WTC11 (cell line): ENCODE measurements at regions of chr11 and their contacts with region 1.

Region 1: DNA sequence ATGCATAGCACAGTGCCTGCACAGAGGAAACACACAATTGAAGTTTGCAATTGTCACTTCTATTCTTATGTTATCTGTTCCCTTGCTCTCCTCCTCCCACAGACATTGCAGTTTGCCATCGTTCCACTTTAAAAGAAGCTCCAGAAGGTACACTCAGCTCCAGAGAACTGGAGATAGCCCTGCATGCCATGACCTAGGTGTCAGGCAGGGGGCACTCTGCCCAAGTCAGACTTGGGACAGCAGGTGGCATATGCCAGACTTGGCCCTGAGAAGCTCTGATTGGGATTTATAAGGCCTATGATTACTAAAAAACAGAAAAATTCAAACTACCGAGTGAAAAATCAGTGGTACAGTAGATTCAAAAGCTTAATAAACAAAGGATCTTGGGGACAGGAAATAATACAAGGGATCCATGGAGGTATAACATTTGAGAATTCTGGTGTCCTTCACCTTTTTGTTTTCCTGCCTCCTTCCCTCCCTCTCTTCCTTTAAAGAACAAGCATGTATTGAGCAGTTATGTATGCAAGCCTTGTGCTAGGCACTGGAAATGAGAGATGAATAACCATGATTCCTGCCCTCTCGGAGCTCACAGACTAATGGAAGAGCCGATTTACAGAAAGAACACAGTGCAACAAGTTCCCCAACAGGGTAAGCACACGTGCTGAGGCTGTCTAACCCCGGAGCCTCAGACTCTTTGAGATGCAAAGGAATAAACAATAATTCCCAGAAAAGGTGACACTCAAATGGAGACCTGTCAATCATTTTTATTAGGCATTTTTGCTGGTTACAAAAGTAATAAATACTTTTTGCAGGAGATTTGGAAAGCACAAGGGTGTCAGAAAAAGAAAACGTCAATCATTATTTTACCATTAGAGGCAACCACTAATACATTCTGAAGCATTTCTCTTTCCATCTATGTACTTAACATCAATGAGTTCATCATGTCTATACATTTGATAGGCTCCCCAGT is 39.8 kb downstream of the TENM4 start:
- DNase-seq: peak; percentile 72
- ATAC-seq: peak; percentile 98
- H3K4me3 Mint-ChIP-seq: no peak overlapping the region
- H3K27ac Mint-ChIP-seq: no peak overlapping the region
- H3K4me1 Mint-ChIP-seq: peaks cover 3% of the 10 kb centered on the region
- H3K27me3 Mint-ChIP-seq: no peaks in the 10 kb centered on the region
- CTCF ChIP-seq: peak; percentile 82

Region 2: DNA sequence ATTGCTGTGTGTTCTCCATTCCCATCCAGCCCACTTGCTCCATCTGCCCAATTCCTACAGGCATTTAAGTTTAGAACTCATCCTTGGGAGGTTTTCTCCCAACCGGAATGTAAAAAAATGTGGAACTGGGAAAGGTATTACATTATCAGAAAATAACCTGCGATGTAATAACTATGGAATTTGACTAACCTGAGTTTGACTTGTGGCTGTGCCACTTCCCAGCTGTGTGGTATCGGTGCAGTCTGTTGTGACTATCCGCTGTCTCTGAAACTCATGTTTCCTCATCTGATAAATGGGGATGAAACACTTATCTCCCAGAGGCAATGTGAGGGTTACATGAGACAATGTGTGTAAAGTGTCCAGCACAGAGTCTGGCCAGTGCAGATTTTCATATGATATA is 37.7 kb before region 1 on chr11:
- CTCF ChIA-PET with region 1: interaction called, 11 read pairs
- POLR2A ChIA-PET with region 1: no interaction called
- DNase-seq: no peak
- ATAC-seq: no peak
- H3K4me3 Mint-ChIP-seq: no peak overlapping the region
- H3K27ac Mint-ChIP-seq: no peak overlapping the region
- H3K4me1 Mint-ChIP-seq: peaks cover 11% of the 10 kb centered on the region
- H3K27me3 Mint-ChIP-seq: no peaks in the 10 kb centered on the region
- CTCF ChIP-seq: no peak

Region 3: GRCh38 chr11:79413268-79413667 is 12.3 kb after region 1 on chr11:
- CTCF ChIA-PET with region 1: interaction called, 38 read pairs
- POLR2A ChIA-PET with region 1: interaction called, 3 read pairs
- DNase-seq: peak; percentile 44
- ATAC-seq: peak; percentile 98
- H3K4me3 Mint-ChIP-seq: no peak overlapping the region
- H3K27ac Mint-ChIP-seq: no peak overlapping the region
- H3K4me1 Mint-ChIP-seq: peaks cover 11% of the 10 kb centered on the region
- H3K27me3 Mint-ChIP-seq: peaks cover 3% of the 10 kb centered on the region; the same call in 1 of the 2 replicates
- CTCF ChIP-seq: no peak

Region 4: GRCh38 chr11:79431535-79431934 is 30.5 kb after region 1 on chr11:
- CTCF ChIA-PET with region 1: interaction called, 26 read pairs
- POLR2A ChIA-PET with region 1: no interaction called
- DNase-seq: no peak
- ATAC-seq: no peak
- H3K4me3 Mint-ChIP-seq: no peak overlapping the region
- H3K27ac Mint-ChIP-seq: no peak overlapping the region
- H3K4me1 Mint-ChIP-seq: peaks cover 68% of the 10 kb centered on the region
- H3K27me3 Mint-ChIP-seq: peaks cover 63% of the 10 kb centered on the region
- CTCF ChIP-seq: no peak

Region 5: GRCh38 chr11:79458709-79459108 is 57.7 kb after region 1 on chr11:
- CTCF ChIA-PET with region 1: interaction called, 11 read pairs
- POLR2A ChIA-PET with region 1: no interaction called
- DNase-seq: no peak
- ATAC-seq: no peak
- H3K4me3 Mint-ChIP-seq: no peak overlapping the region
- H3K27ac Mint-ChIP-seq: no peak overlapping the region
- H3K4me1 Mint-ChIP-seq: peaks cover 25% of the 10 kb centered on the region
- H3K27me3 Mint-ChIP-seq: no peaks in the 10 kb centered on the region
- CTCF ChIP-seq: no peak

Region 6: DNA sequence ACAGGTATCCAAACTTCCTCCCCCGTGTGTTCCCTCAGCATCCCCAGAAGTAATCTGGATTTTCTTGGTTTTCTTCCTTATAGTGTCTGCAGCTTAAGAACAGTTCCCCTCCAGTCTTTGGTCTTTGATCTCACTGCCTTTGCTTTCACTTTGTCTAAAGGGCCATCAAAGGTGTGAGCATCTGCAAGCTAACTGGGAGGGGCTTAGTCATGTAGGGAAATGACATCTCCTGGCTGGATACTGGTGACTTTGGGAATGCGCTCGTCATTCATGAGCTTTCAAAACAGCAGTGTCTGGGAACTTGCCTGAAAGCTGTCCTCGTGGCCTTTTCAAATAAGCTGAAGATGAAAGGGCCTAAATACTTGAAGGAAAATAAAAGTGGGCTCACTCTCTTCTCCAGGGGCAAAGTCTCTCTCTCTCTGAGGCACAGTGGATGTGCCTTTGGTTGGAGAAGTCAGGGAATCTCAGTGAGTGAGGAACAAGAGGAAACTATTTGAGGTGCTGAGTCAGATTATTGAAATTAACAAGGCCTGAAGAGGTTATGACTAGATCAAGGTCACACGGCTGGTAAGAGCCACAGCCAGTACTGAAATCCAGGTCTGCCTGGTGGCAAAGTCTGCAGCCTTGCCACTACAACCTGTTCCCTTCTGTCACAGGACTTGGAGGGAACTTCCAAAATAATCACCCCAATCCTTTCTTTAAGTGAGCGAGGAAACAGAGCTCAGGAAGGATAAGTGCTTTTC is 85.4 kb after region 1 on chr11:
- CTCF ChIA-PET with region 1: interaction called, 13 read pairs
- POLR2A ChIA-PET with region 1: no interaction called
- DNase-seq: no peak
- ATAC-seq: peak; percentile 25
- H3K4me3 Mint-ChIP-seq: peak overlapping the region; percentile 41
- H3K27ac Mint-ChIP-seq: no peak overlapping the region; the same call in 1 of the 2 replicates
- H3K4me1 Mint-ChIP-seq: peaks cover 39% of the 10 kb centered on the region
- H3K27me3 Mint-ChIP-seq: peaks cover 16% of the 10 kb centered on the region
- CTCF ChIP-seq: no peak